ENCODE measurements at regions of chrX and their contacts with region 1.

Region 1: GRCh38 chrX:119693040-119693995 is at the start of gene SEPTIN6:
- DNase-seq: peak; percentile 52
- ATAC-seq: peak; percentile 79
- H3K4me3 ChIP-seq: peak within 1 kb of the TSS; percentile 88
- H3K27ac ChIP-seq: peak within 1 kb of the TSS; percentile 24
- H3K4me1 ChIP-seq: peaks cover 3% of the 10 kb centered on the region; the same call in 1 of the 2 replicates
- H3K27me3 ChIP-seq: no peaks in the 10 kb centered on the region
- CTCF ChIP-seq: no peak
- POLR2A ChIP-seq: peak; percentile 72; the same call in 1 of the 2 replicates
- RAD21 ChIP-seq: no peak
- total RNA-seq, gene SEPTIN6: 14.2 and 19.0 TPM in 2 replicates

Region 2: DNA sequence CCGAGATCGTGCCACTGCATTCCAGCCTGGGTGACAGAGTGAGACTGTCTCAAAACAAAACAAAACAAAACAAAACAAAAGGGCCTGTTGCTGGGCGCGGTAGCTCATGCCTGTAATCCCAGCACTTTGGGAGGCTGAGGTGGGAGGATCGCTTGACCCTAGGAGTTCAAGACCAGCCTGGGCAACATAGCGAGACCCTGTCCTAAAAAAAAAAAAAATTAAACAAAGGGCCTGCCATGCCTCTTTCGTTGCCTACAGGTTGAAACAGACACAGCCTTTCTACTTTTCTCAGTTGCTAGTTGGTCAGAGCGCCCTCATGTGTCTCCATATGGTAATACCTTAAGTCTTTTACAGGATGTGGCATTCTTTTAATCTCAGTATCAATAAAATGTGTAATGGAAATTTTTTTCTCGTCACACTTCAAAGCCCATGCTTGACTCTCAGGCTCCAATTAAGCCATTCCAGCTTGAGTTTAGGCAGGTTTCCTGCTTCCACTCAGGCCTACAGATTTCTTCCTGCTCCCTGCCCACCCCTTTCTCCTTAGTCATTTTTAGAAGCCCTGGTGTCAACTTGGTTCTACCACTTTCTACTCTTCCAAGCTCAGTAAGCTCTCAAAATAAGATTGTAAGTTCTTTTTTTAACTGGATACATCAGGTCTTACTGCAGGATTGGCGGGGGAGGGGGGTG is 60.4 kb after region 1 on chrX:
- CTCF ChIA-PET with region 1: no interaction called
- POLR2A ChIA-PET with region 1: no interaction called
- dilution Hi-C with region 1: no loop called
- in situ Hi-C with region 1: no loop called
- intact Hi-C with region 1: loop called (anchors 10 kb)
- DNase-seq: peak; percentile 24
- ATAC-seq: no peak
- H3K4me3 ChIP-seq: no peak overlapping the region
- H3K27ac ChIP-seq: no peak overlapping the region
- H3K4me1 ChIP-seq: peaks cover 3% of the 10 kb centered on the region
- H3K27me3 ChIP-seq: no peaks in the 10 kb centered on the region
- CTCF ChIP-seq: peak; percentile 45
- POLR2A ChIP-seq: no peak
- RAD21 ChIP-seq: peak; percentile 36

Region 3: GRCh38 chrX:119852382-119853353 is 159.3 kb after region 1 on chrX and contains the start of gene UPF3B:
- CTCF ChIA-PET with region 1: no interaction called
- POLR2A ChIA-PET with region 1: no interaction called
- dilution Hi-C with region 1: no loop called
- in situ Hi-C with region 1: no loop called
- intact Hi-C with region 1: loop called (anchors 2 kb)
- DNase-seq: peak; percentile 98
- ATAC-seq: peak; percentile 97
- H3K4me3 ChIP-seq: peak within 1 kb of the TSS; percentile 82
- H3K27ac ChIP-seq: peak within 1 kb of the TSS; percentile 86
- H3K4me1 ChIP-seq: no peaks in the 10 kb centered on the region
- H3K27me3 ChIP-seq: no peaks in the 10 kb centered on the region
- CTCF ChIP-seq: no peak
- POLR2A ChIP-seq: peak; percentile 65; the same call in 1 of the 2 replicates
- RAD21 ChIP-seq: no peak
- total RNA-seq, gene UPF3B: 0.54 and 1.4 TPM in 2 replicates

Region 4: GRCh38 chrX:120271218-120271617 is 577.9 kb after region 1 on chrX:
- CTCF ChIA-PET with region 1: no interaction called
- POLR2A ChIA-PET with region 1: no interaction called
- dilution Hi-C with region 1: no loop called
- in situ Hi-C with region 1: no loop called
- intact Hi-C with region 1: no loop called
- DNase-seq: no peak
- ATAC-seq: no peak
- H3K4me3 ChIP-seq: no peak overlapping the region
- H3K27ac ChIP-seq: no peak overlapping the region
- H3K4me1 ChIP-seq: no peaks in the 10 kb centered on the region
- H3K27me3 ChIP-seq: no peaks in the 10 kb centered on the region
- CTCF ChIP-seq: no peak
- POLR2A ChIP-seq: no peak
- RAD21 ChIP-seq: no peak